ENCODE measurements at regions of chr12 and their contacts with region 1.

Region 1: DNA sequence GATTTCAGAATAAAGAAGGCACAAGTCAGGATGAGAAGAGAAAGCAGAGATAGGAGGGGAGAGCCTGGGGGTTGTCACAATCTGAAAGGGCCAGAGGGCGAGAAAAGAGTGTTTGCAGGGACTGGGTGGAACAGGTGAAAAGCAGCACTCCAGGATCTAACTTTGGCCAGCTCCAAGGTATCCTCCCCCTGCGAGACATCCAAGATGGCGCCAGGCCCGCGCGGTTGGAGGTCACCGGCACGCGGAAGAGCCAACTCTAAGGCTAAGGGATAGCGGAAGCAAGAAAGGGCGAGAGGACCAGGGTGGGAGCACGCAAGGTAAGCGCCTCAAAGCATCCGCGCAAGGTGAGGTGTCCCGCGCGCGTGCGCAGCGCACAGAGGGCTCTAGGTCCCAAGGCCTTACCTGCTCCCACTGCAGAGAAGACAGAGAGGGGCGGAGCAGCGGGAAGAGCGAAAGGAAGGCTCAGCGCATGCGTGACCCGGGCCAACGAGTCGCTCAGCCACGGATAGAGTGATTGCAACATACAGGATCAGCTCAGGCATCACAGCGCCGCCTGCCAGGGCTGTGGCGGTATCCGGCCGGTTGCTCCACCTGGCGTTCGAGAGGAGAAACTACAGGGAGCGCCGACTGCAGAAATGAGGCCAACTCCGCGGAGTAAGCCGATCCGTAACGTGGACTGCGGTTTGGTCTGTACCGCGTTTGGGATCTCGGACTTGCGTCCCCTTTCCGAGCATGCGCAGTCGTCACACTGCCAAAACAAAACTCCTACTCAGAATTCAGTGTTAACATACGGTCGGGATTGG is at the start of gene ATP5MC2:
- DNase-seq: peak; percentile 99
- H3K4me3 ChIP-seq: peak within 1 kb of the TSS; percentile 94
- H3K27ac ChIP-seq: peak within 1 kb of the TSS; percentile 91
- H3K27me3 ChIP-seq: no peaks in the 10 kb centered on the region
- CTCF ChIP-seq: peak; percentile 100
- polyA plus RNA-seq, gene ATP5MC2: 261 and 433 TPM in 2 replicates

Region 2: GRCh38 chr12:53492830-53493611 is 182.8 kb before region 1 on chr12:
- CTCF ChIA-PET with region 1: no interaction called
- POLR2A ChIA-PET with region 1: interaction called, 10 read pairs
- DNase-seq: no peak
- H3K4me3 ChIP-seq: peak overlapping the region; percentile 60
- H3K27ac ChIP-seq: peak overlapping the region; percentile 65
- H3K27me3 ChIP-seq: no peaks in the 10 kb centered on the region
- CTCF ChIP-seq: no peak

Region 3: GRCh38 chr12:53538196-53538689 is 137.6 kb before region 1 on chr12:
- CTCF ChIA-PET with region 1: interaction called, 103 read pairs
- POLR2A ChIA-PET with region 1: interaction called, 11 read pairs
- DNase-seq: no peak
- H3K4me3 ChIP-seq: no peak overlapping the region
- H3K27ac ChIP-seq: no peak overlapping the region
- H3K27me3 ChIP-seq: no peaks in the 10 kb centered on the region
- CTCF ChIP-seq: no peak

Region 4: GRCh38 chr12:53625946-53626701 is 49.7 kb before region 1 on chr12 and contains the start of gene ATF7:
- CTCF ChIA-PET with region 1: interaction called, 9 read pairs
- POLR2A ChIA-PET with region 1: interaction called, 14 read pairs
- DNase-seq: peak; percentile 93
- H3K4me3 ChIP-seq: peak within 1 kb of the TSS; percentile 84
- H3K27ac ChIP-seq: peak within 1 kb of the TSS; percentile 93
- H3K27me3 ChIP-seq: no peaks in the 10 kb centered on the region
- CTCF ChIP-seq: no peak
- polyA plus RNA-seq, gene ATF7: 21.7 and 27.1 TPM in 2 replicates

Region 5: DNA sequence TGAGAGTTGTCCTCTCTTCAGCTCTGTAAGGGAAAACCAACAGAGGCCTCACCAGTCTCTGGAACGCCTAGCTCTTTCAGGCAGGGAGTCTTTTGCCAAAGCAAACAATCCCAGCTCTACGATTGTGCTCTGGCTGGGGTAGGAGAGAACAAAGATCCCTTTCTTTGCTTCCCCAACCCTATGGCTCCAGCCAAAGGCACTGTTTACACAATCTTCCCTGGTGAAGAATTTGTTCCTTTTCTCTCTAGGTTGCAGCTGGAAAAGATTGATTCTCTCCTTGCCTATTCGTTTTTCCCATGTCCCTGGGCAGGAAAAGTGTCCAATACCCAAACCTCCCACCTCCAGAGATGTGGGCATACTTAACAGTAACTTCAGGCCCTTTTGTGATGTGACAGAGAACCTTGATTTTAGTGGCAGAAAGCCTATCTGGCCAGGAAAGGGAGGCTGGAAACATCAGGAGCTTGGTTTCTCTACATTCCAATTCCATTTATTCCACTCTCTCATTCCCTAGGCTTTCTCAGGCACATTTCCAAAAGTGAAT is 16.8 kb before region 1 on chr12:
- CTCF ChIA-PET with region 1: interaction called, 14 read pairs
- POLR2A ChIA-PET with region 1: interaction called, 4 read pairs
- DNase-seq: peak; percentile 43
- H3K4me3 ChIP-seq: peak overlapping the region; percentile 20
- H3K27ac ChIP-seq: peak overlapping the region; percentile 95
- H3K27me3 ChIP-seq: no peaks in the 10 kb centered on the region
- CTCF ChIP-seq: no peak

Region 6: DNA sequence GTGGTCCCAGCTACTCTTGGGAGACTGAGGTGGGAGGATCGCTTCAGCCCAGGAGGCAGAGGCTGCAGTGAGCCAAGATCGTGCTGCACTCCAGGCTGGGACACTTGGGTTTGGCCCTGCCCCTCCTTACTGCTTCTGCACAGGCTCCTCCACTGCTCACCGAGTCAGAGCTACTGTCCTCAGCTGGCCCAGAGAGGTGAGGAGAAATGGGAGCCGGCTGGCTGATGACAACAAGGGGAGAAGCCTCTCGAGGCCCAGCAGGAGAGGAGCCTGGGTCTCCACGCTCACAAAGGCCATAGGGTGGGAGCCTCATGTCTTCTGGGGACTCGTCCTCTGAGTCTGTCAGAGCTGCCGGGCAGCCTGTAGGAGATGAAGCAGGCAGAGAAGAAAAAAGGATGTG is 37.7 kb after region 1 on chr12:
- CTCF ChIA-PET with region 1: no interaction called
- POLR2A ChIA-PET with region 1: no interaction called
- DNase-seq: no peak
- H3K4me3 ChIP-seq: no peak overlapping the region
- H3K27ac ChIP-seq: no peak overlapping the region
- H3K27me3 ChIP-seq: peaks cover 6% of the 10 kb centered on the region
- CTCF ChIP-seq: no peak

Measured in AG04450 (cell line).